GM23248 (cell line): ENCODE measurements at regions of chr22 and their contacts with region 1.

Region 1: GRCh38 chr22:19419464-19420178 is 11.9 kb downstream of the HIRA start:
- DNase-seq: no peak
- H3K4me3 ChIP-seq: no peak overlapping the region
- H3K27ac ChIP-seq: no peak overlapping the region
- H3K4me1 ChIP-seq: peaks cover 3% of the 10 kb centered on the region; the same call in 1 of the 2 replicates
- H3K27me3 ChIP-seq: no peaks in the 10 kb centered on the region

Region 2: GRCh38 chr22:19134176-19134831 is 285.3 kb before region 1 on chr22:
- in situ Hi-C with region 1: no loop called
- DNase-seq: no peak
- H3K4me3 ChIP-seq: no peak overlapping the region
- H3K27ac ChIP-seq: no peak overlapping the region
- H3K4me1 ChIP-seq: no peaks in the 10 kb centered on the region
- H3K27me3 ChIP-seq: no peaks in the 10 kb centered on the region

Region 3: GRCh38 chr22:19357270-19358105 is 62.1 kb before region 1 on chr22:
- in situ Hi-C with region 1: loop called (anchors 10 kb)
- DNase-seq: peak; percentile 23
- H3K4me3 ChIP-seq: no peak overlapping the region
- H3K27ac ChIP-seq: no peak overlapping the region
- H3K4me1 ChIP-seq: no peaks in the 10 kb centered on the region
- H3K27me3 ChIP-seq: no peaks in the 10 kb centered on the region

Region 4: DNA sequence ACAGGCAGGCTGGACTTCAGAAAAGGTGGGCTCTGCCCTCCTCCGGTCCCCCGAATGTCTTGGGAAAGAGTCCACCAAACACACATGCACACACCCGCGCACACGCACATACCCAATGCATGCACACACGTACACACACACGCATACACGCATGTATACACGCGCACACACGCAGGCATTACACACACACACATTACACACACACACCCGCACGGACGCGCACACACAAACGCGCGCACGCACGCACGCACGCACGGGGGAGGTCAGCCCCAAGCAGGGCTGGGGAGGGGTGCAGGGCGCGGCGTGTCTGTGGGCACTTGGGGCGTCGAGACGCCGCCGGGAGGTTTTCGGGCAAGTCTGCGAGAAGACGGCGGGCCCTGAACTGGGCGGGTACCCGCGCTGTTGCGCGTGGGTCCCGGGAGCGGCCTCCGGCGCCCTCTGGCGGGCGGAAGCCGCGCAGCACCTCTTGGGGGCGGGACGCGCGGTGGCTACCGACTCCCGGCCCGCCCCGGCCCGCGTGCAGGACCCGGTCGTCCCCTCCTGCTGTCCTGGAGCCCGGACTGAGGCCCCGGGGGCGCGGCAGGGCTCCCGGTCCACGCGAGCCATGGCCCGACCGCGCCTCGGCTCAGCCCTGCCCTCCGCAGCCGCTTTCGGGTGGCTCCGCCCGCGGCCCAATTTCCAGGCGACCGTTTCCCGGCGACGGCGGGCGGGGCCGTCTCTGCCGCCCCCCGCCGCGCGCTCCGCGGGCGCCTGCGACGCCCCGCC is 298.3 kb after region 1 on chr22:
- in situ Hi-C with region 1: no loop called
- DNase-seq: peak; percentile 84
- H3K4me3 ChIP-seq: peak overlapping the region; percentile 73
- H3K27ac ChIP-seq: no peak overlapping the region
- H3K4me1 ChIP-seq: no peaks in the 10 kb centered on the region
- H3K27me3 ChIP-seq: no peaks in the 10 kb centered on the region